ENCODE measurements at regions of chr6 and their contacts with region 1.

Region 1: DNA sequence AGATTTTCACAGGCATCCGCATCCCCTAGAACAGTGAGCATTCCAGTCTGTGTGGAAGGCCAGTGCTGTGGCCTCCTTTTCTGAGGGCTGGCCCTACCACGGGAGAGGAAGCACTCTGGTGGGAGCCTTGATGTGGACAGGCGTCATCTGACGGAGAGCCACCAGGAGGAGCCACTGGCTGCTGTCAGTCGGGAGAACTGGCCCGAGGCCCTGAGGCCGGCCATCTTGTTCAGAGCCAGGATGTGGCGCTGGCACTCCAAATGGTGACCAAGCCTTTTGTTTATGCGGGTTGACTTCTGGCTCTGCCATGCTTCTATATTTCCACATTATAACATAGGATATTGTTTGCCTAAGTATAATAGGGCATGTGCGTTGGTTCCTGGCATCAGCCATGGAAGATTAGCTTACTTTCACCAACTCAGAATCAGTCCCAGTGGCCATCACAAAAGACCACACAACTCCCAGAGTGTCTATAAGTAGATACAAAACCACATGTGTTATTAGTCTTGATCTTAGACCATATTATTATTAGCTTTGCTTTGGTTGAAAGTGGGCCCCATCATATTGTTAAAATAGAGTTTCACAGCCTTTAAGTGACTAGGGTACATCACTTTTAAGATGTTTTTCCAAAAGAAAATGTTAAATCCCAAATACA is 273.9 kb upstream of the TAB2 start:
- DNase-seq: peak; percentile 67
- ATAC-seq: peak; percentile 40
- H3K4me3 Mint-ChIP-seq: no peak overlapping the region
- H3K27ac Mint-ChIP-seq: no peak overlapping the region
- H3K4me1 Mint-ChIP-seq: peaks cover 41% of the 10 kb centered on the region
- H3K27me3 Mint-ChIP-seq: no peaks in the 10 kb centered on the region
- CTCF ChIP-seq: peak; percentile 43

Region 2: DNA sequence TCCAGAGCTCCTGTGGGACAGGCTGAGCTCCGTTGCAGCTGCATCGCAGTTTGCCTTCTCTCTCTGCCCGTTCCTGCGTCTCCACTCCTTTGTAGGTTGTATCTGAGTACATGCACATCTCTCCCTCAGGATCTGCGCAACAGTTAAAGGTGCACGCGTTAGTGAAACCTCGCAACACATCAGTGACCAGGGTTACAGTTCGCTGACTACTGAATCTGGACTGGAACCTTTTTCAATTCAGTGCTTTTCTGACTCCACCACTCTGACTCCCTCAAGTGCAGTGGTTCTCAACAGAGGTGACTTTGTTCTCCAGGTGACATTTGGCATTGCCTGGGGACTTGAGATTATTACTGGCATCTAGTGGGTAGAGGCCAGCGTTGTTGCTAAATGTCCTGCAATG is 252.8 kb before region 1 on chr6:
- CTCF ChIA-PET with region 1: no interaction called
- POLR2A ChIA-PET with region 1: no interaction called
- intact Hi-C with region 1: no loop called
- DNase-seq: no peak
- ATAC-seq: no peak
- H3K4me3 Mint-ChIP-seq: no peak overlapping the region
- H3K27ac Mint-ChIP-seq: no peak overlapping the region
- H3K4me1 Mint-ChIP-seq: no peaks in the 10 kb centered on the region
- H3K27me3 Mint-ChIP-seq: peaks cover 1% of the 10 kb centered on the region
- CTCF ChIP-seq: no peak

Region 3: GRCh38 chr6:149055195-149055899 is 11.7 kb after region 1 on chr6:
- CTCF ChIA-PET with region 1: interaction called, 61 read pairs
- POLR2A ChIA-PET with region 1: interaction called, 3 read pairs
- intact Hi-C with region 1: no loop called
- DNase-seq: no peak
- ATAC-seq: no peak
- H3K4me3 Mint-ChIP-seq: no peak overlapping the region
- H3K27ac Mint-ChIP-seq: no peak overlapping the region
- H3K4me1 Mint-ChIP-seq: peaks cover 38% of the 10 kb centered on the region
- H3K27me3 Mint-ChIP-seq: no peaks in the 10 kb centered on the region
- CTCF ChIP-seq: no peak

Region 4: GRCh38 chr6:149060300-149060997 is 16.8 kb after region 1 on chr6:
- CTCF ChIA-PET with region 1: interaction called, 61 read pairs
- POLR2A ChIA-PET with region 1: interaction called, 6 read pairs
- intact Hi-C with region 1: no loop called
- DNase-seq: peak; percentile 77
- ATAC-seq: peak; percentile 93
- H3K4me3 Mint-ChIP-seq: peak overlapping the region; percentile 60
- H3K27ac Mint-ChIP-seq: peak overlapping the region; percentile 84
- H3K4me1 Mint-ChIP-seq: peaks cover 43% of the 10 kb centered on the region
- H3K27me3 Mint-ChIP-seq: no peaks in the 10 kb centered on the region
- CTCF ChIP-seq: no peak

Measured in activated CD8-positive, alpha-beta T cell treated with anti-CD3 and anti-CD28 coated beads for 36 hours (primary cell).